Upper lobe of right lung (tissue), 1 donor: ENCODE measurements at regions of chr12 and their contacts with region 1.

Region 1: DNA sequence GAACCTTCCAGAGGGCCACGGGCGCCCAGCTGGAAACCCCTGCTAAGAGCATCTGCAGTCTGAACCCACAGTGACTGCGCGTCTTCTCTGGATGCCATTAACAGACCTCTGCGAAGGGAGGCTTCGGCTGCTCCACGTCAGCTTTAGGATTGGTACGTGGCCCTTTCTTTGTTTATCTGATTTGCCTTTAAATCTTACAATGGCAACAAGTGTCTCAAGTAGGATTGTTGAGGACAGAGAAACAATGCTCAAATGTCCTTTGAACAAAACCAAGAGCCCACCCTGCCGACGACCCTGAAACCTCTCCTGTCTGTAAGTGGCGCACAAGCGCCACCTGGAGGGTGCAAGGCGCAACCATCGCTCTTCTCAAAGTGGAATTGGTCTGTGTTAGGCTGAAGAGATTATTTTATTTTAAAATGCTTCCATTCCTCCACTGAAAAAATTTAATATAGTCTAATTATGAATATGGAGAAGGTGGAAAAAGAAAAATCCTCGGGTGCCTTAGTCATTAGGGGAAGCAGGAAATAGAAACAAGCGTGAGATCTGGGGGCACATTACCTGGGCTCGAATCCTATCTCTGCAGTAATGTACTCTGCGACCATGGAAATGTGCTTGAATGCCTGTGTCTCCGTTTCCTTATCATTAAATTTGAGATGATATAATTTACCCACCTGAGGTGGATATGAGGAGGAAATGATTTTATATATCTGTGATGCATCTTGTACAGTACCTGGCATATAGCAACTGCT is 82.6 kb upstream of the PTPRB start:
- DNase-seq: peak; percentile 67
- ATAC-seq: peak; percentile 81
- H3K4me3 ChIP-seq: peak overlapping the region; percentile 34
- H3K27ac ChIP-seq: peak overlapping the region; percentile 70
- H3K4me1 ChIP-seq: peaks cover 8% of the 10 kb centered on the region
- H3K27me3 ChIP-seq: peaks cover 11% of the 10 kb centered on the region
- CTCF ChIP-seq: peak; percentile 87

Region 2: GRCh38 chr12:70590051-70590450 is 129.8 kb before region 1 on chr12:
- intact Hi-C with region 1: loop called (anchors 10 kb)
- DNase-seq: peak; percentile 80
- ATAC-seq: peak; percentile 93
- H3K4me3 ChIP-seq: no peak overlapping the region
- H3K27ac ChIP-seq: no peak overlapping the region
- H3K4me1 ChIP-seq: no peaks in the 10 kb centered on the region
- H3K27me3 ChIP-seq: peaks cover 4% of the 10 kb centered on the region
- CTCF ChIP-seq: peak; percentile 88